GM12878 (cell line): ENCODE measurements at regions of chr19 and their contacts with region 1.

Region 1: GRCh38 chr19:16118489-16119033 is 6.9 kb downstream of the RAB8A start:
- DNase-seq: peak; percentile 97
- ATAC-seq: peak; percentile 82
- H3K4me3 ChIP-seq: peak overlapping the region; percentile 59; the same call in 1 of the 2 replicates
- H3K27ac ChIP-seq: peak overlapping the region; percentile 100
- H3K4me1 ChIP-seq: peaks cover 62% of the 10 kb centered on the region
- H3K27me3 ChIP-seq: no peaks in the 10 kb centered on the region
- CTCF ChIP-seq: no peak
- EP300 ChIP-seq: peak; percentile 95 to 99
- POLR2A ChIP-seq: peak; percentile 80
- RAD21 ChIP-seq: no peak

Region 2: DNA sequence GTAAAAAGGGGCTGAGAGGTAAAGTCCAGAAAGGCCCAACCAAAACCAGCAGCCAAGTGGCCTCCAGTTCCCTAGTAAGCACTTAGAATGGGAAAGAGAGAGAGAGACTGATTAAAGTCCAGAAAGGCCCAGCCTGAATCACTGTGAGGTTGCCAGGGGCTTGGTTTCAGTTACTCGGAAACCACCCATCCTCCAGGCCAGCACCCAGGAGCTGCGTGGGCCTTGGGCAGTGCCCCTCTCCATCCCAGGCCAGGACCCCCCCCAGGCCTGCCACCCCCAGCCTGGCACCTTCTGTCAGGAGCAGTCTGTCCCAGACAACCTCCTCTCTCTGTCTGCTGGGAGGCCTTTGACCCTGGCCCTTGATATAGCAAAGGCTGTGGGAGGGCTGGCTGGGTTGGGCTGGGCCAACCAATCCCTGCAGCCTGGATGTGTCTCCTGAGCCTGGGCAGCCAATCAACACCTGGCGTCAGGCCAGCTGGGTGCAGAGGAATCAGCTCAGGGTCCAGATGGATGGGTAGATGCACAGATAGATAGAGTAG is 220.8 kb before region 1 on chr19 and contains the start of gene CYP4F2:
- CTCF ChIA-PET with region 1: no interaction called
- POLR2A ChIA-PET with region 1: no interaction called
- RAD21 ChIA-PET with region 1: no interaction called
- SMC1A ChIA-PET with region 1: no interaction called
- in situ Hi-C with region 1: no loop called
- intact Hi-C with region 1: no loop called
- DNase-seq: no peak
- ATAC-seq: no peak
- H3K4me3 ChIP-seq: no peak within 1 kb of the TSS
- H3K27ac ChIP-seq: no peak within 1 kb of the TSS
- H3K4me1 ChIP-seq: no peaks in the 10 kb centered on the region
- H3K27me3 ChIP-seq: peaks cover 0 to 3% of the 10 kb centered on the region in 2 experiments; a peak in 1 of 4 replicates
- CTCF ChIP-seq: no peak
- EP300 ChIP-seq: no peak
- POLR2A ChIP-seq: no peak
- RAD21 ChIP-seq: no peak
- polyA plus RNA-seq, gene CYP4F2: 0.08 to 0.24 TPM

Region 3: GRCh38 chr19:16048605-16049004 is 70.0 kb before region 1 on chr19:
- CTCF ChIA-PET with region 1: no interaction called
- POLR2A ChIA-PET with region 1: no interaction called
- RAD21 ChIA-PET with region 1: no interaction called
- SMC1A ChIA-PET with region 1: no interaction called
- in situ Hi-C with region 1: no loop called
- intact Hi-C with region 1: no loop called
- DNase-seq: no peak
- ATAC-seq: no peak
- H3K4me3 ChIP-seq: no peak overlapping the region
- H3K27ac ChIP-seq: no peak overlapping the region
- H3K4me1 ChIP-seq: no peaks in the 10 kb centered on the region
- H3K27me3 ChIP-seq: no peaks in the 10 kb centered on the region
- CTCF ChIP-seq: no peak
- EP300 ChIP-seq: no peak
- POLR2A ChIP-seq: no peak
- RAD21 ChIP-seq: no peak

Region 4: DNA sequence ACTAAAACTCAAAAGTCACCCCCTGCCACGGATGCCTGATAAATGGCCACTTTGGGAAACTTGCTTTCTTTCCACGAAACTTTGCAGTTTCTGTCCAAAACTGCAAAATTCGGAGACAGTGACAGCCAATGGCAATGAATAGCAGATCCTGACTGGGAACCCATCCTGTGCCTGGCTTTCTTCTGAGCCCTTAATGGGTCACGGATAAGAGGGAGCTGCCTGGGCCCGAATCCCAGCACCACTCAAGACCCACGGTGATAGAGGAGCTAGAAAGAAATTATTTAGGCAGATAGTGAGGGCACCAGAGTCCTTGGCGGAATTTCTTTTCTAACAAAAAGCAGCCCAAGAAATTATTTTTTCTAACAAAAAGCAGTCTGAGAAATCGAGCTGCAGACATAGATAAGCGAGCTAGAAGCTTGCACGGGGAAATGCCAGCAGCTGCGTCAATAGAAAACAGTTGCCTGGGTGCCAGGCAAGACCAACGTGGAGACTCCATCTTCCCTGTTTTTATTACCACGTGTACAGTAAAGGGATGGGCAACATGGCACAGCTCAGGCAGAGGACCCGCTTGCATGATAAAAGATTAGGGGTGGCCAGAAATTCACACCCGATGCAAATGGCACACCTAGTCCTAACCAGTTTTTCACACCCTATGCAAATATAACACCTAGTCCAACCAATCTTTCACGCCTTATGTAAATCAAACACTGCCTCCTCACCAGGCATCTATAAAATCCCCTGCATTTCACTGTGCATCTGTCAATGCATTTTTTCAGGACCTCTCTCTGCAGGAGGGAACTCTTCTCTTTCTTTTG is 17.8 kb after region 1 on chr19:
- CTCF ChIA-PET with region 1: interaction called, 111 read pairs
- POLR2A ChIA-PET with region 1: interaction called, 174 read pairs
- RAD21 ChIA-PET with region 1: interaction called, 12 read pairs
- SMC1A ChIA-PET with region 1: interaction called, 41 read pairs
- in situ Hi-C with region 1: no loop called
- intact Hi-C with region 1: no loop called
- DNase-seq: no peak
- ATAC-seq: peak; percentile 1; the same call in 1 of the 3 replicates
- H3K4me3 ChIP-seq: no peak overlapping the region
- H3K27ac ChIP-seq: no peak overlapping the region
- H3K4me1 ChIP-seq: peaks cover 54% of the 10 kb centered on the region
- H3K27me3 ChIP-seq: no peaks in the 10 kb centered on the region
- CTCF ChIP-seq: no peak
- EP300 ChIP-seq: no peak
- POLR2A ChIP-seq: 0 out of 2 replicates have a peak, but pooled peaks have one; percentile 17
- RAD21 ChIP-seq: no peak

Region 5: DNA sequence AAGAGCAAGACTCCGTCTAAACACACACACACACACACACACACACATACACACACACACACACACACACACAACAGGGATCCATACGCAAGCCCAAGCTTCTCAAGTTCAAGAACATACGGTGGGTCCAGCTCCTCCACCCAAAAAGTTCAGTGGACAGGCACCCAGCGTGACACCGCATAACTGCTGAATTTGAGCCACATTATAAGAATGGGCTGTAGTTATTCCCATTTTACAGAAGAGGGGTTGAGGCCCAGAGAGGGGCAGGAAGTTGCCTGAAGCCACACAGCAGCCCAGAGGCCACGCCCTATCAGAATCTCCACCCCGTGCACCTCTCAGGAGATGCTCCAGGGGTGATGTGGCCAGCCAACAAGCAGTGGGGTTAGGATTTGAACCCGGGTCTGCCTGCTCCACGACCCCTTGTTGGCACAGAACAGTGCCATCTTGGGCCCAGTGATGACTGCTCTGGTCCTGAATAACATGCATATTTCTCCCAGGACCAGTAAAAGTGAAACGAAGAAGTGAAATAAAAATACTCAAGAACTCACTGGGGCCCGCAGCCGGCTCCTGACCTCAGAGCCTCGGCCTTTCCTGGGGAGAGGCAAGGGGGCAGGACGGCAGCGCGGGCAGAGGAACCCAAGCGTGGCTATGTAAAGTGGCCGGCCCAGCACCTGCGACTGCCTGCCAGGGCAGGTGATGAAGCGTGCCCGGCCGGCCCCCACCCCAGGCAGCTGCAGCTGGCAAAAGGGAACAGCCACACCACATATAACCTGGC is 141.0 kb after region 1 on chr19:
- CTCF ChIA-PET with region 1: no interaction called
- POLR2A ChIA-PET with region 1: no interaction called
- RAD21 ChIA-PET with region 1: no interaction called
- SMC1A ChIA-PET with region 1: no interaction called
- in situ Hi-C with region 1: no loop called
- intact Hi-C with region 1: no loop called
- DNase-seq: peak; percentile 52
- ATAC-seq: peak; percentile 93
- H3K4me3 ChIP-seq: 0 out of 2 replicates have a peak overlapping the region, but pooled peaks have one; percentile 7
- H3K27ac ChIP-seq: peak overlapping the region; percentile 27; the same call in 1 of the 2 replicates
- H3K4me1 ChIP-seq: peaks cover 47% of the 10 kb centered on the region
- H3K27me3 ChIP-seq: no peaks in the 10 kb centered on the region; a peak in 1 of 4 replicates
- CTCF ChIP-seq: no peak
- EP300 ChIP-seq: no peak
- POLR2A ChIP-seq: no peak
- RAD21 ChIP-seq: no peak